Spleen (tissue), 13 donors: ENCODE measurements at regions of chr12 and their contacts with region 1.

Region 1: GRCh38 chr12:104108755-104109445 is 29.1 kb downstream of the NFYB start:
- DNase-seq: peak; percentile 89
- H3K4me3 ChIP-seq: no peak overlapping the region
- H3K27ac ChIP-seq: no peak overlapping the region
- H3K4me1 ChIP-seq: peaks cover 0 to 12% (median 6%) of the 10 kb centered on the region in 6 donors
- H3K27me3 ChIP-seq: no peaks in the 10 kb centered on the region
- CTCF ChIP-seq: peak; percentile 65 to 87 (median 77)
- POLR2A ChIP-seq: no peak

Region 2: GRCh38 chr12:103877934-103878510 is 230.9 kb before region 1 on chr12:
- intact Hi-C with region 1: loop called (anchors 5 kb)
- DNase-seq: no peak
- H3K4me3 ChIP-seq: no peak overlapping the region
- H3K27ac ChIP-seq: no peak overlapping the region
- H3K4me1 ChIP-seq: peaks cover 0 to 25% (median 2%) of the 10 kb centered on the region in 6 donors
- H3K27me3 ChIP-seq: no peaks in the 10 kb centered on the region
- CTCF ChIP-seq: peak; percentile 25 to 80 (median 70)
- POLR2A ChIP-seq: no peak

Region 3: GRCh38 chr12:104057771-104058197 is 51.1 kb before region 1 on chr12:
- intact Hi-C with region 1: loop called (anchors 5 kb)
- DNase-seq: no peak
- H3K4me3 ChIP-seq: no peak overlapping the region
- H3K27ac ChIP-seq: no peak overlapping the region
- H3K4me1 ChIP-seq: peaks cover 0 to 4% (median 0%) of the 10 kb centered on the region in 6 donors
- H3K27me3 ChIP-seq: peaks cover 0 to 4% (median 0%) of the 10 kb centered on the region in 7 donors
- CTCF ChIP-seq: peak in 10 of 11 experiments; percentile 22 to 66 (median 64)
- POLR2A ChIP-seq: no peak

Region 4: GRCh38 chr12:104399740-104400612 is 291.1 kb after region 1 on chr12:
- intact Hi-C with region 1: no loop called
- DNase-seq: no peak
- H3K4me3 ChIP-seq: no peak overlapping the region
- H3K27ac ChIP-seq: no peak overlapping the region
- H3K4me1 ChIP-seq: no peaks in the 10 kb centered on the region
- H3K27me3 ChIP-seq: no peaks in the 10 kb centered on the region
- CTCF ChIP-seq: no peak
- POLR2A ChIP-seq: no peak